RWPE1 (cell line): ENCODE measurements at regions of chr17 and their contacts with region 1.

Region 1: DNA sequence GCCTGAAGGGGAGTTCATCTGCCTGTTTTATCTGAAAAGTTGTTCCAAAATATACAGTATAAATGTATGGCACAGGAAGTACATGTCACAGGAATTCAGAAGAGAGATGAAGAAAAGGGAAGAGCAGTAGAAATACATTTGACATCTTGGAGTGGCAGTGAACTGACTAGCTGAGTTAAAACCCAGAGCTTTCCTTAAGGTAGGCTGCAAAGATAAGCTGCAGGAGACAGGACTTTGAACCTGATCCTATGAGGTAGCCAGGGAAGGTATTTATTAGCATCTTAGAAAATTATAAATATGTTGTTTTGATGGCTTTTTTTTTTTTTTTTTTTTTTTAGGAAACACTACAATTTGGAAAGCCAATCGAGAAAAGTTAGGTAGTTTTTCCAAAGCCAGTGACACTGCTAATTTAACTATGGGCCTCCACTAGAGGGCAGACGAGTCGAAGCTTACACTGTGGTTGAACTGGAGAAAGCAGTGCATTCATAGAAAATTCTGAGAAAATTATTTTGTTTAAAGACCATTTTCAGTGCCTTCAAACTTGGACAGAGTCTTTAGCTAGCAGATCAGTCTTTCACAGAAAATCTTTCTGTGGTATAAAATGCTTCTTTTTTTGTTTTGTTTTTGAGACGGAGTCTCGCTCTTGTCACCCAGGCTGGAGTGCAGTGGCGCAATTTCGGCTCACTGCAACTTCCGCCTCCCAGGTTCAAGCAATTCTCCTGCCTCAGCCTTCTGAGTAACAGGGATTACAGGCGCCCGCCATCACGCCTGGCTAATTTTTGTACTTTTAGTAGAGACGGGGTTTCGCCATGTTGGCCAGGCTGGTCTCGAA is 122.3 kb downstream of the SSH2 start:
- DNase-seq: peak; percentile 55
- H3K27ac ChIP-seq: peak overlapping the region; percentile 31; the same call in 1 of the 2 replicates
- CTCF ChIP-seq: peak; percentile 77

Region 2: DNA sequence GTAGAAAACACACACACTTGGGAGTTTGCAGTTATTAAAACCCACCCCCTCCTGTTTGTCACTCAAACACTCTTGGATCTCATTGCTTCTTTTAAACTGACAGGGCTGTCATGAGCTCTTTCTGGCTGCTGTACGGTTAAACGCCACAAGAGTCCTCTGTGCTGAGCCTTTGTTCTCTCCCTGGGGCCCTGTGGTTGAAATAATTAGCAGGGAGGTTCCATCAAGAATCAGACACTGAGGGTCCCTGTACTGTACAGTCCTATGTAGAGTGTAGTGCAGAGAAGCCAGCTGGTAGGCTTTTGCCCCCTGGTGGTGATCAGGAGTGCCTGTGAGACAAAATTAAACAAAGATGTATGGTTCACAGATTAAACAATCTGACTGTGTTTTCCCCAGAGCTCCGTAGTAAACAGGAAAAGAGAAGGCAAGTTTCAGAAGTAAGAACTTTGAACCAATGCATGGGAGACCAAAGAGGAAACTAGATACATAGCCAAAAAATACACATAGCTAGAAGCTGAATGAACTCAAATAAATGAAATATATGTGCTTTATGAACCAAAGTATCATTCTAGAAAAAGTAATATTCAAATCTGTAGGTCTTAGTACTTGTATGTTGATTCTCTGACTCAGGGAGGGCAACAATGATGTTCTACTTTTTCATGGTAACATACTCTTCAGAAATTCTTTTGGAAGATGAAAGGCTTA is 123.6 kb after region 1 on chr17:
- CTCF ChIA-PET with region 1: interaction called, 73 read pairs
- POLR2A ChIA-PET with region 1: interaction called, 7 read pairs
- DNase-seq: peak; percentile 54
- H3K27ac ChIP-seq: no peak overlapping the region
- CTCF ChIP-seq: peak; percentile 93

Region 3: GRCh38 chr17:29958947-29959657 is 151.4 kb after region 1 on chr17:
- CTCF ChIA-PET with region 1: interaction called, 10 read pairs
- POLR2A ChIA-PET with region 1: interaction called, 12 read pairs
- DNase-seq: peak; percentile 6
- H3K27ac ChIP-seq: no peak overlapping the region
- CTCF ChIP-seq: no peak